Mammary epithelial cell (primary cell): ENCODE measurements at regions of chr3 and their contacts with region 1.

Region 1: DNA sequence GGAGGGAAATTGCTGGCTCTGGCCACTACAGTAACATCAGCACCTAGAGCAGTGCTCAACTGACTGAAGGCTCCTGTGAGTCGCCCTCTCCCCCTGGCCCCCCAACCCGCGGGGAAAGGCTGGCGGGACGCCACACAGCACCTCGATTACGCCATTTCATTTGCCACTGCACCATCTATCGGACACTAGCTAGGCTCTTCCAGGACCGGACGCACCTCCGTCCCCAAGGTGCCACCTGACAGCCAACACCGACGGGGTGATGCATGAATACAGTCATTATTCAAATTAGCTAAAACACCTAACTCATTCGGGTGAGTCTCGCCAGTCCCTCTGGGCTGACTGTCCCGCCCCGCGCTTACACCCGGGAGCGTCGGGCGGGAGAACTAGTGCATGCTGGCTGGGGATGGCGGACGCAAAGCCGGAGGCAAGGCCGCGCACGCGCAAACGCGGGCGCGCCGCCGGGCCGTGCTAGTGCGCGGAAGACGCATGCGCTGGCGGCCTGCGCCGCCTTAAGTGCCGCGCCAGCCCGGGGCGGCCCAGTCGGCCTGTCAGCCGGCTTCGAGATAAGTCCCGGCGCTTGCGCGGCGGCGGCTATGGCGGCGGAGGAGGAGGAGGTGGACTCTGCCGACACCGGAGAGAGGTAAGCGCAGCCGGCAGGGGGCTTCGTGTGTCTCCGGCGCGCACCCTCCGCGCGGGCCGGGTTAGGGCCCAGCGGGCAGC is at the start of gene ABHD5:
- DNase-seq: peak; percentile 95
- H3K4me3 ChIP-seq: peak within 1 kb of the TSS; percentile 74 to 87 (median 85)
- H3K27ac ChIP-seq: peak within 1 kb of the TSS; percentile 55
- H3K4me1 ChIP-seq: peaks cover 42% of the 10 kb centered on the region
- H3K27me3 ChIP-seq: no peaks in the 10 kb centered on the region
- CTCF ChIP-seq: peak in 1 of 2 donors; percentile 29
- total RNA-seq, gene ABHD5: 37.9 to 59.8 TPM

Region 2: DNA sequence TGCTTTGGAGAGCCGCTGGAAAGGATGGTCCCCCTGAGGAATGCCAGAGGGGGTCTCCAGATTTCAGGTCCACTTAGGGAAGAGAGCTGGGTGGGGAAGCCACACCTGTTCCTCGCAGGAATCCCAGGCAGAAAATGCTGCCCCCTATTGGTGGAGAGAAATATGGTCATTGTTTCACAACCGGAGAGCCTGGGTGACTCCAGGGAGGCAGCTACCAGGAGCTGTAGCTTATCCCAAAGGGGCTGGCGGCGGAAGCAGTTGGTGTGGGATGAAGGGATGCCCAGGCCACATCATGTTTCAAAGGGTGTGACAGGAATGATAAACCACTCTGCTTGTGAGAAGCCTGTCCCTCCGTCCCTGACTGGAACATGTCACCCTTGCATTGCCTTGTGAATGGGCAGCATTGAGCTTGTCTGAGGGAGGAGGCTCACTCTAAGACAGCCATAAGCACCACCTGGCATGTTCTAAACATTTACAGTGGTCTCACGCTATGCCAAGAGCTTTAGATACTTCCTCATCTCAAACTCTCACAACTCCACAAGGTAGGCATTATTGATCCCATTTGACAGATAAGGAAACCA is 619.2 kb before region 1 on chr3:
- CTCF ChIA-PET with region 1: no interaction called
- dilution Hi-C with region 1: no loop called
- in situ Hi-C with region 1: no loop called
- intact Hi-C with region 1: no loop called
- DNase-seq: no peak
- H3K4me3 ChIP-seq: no peak overlapping the region
- H3K27ac ChIP-seq: no peak overlapping the region
- H3K4me1 ChIP-seq: no peaks in the 10 kb centered on the region
- H3K27me3 ChIP-seq: no peaks in the 10 kb centered on the region
- CTCF ChIP-seq: peak; percentile 48 to 60

Region 3: GRCh38 chr3:43223670-43224364 is 466.7 kb before region 1 on chr3:
- CTCF ChIA-PET with region 1: no interaction called
- dilution Hi-C with region 1: no loop called
- in situ Hi-C with region 1: no loop called
- intact Hi-C with region 1: loop called (anchors 10 kb)
- DNase-seq: no peak
- H3K4me3 ChIP-seq: no peak overlapping the region
- H3K27ac ChIP-seq: no peak overlapping the region
- H3K4me1 ChIP-seq: no peaks in the 10 kb centered on the region
- H3K27me3 ChIP-seq: peaks cover 2% of the 10 kb centered on the region
- CTCF ChIP-seq: peak; percentile 30 to 52

Region 4: DNA sequence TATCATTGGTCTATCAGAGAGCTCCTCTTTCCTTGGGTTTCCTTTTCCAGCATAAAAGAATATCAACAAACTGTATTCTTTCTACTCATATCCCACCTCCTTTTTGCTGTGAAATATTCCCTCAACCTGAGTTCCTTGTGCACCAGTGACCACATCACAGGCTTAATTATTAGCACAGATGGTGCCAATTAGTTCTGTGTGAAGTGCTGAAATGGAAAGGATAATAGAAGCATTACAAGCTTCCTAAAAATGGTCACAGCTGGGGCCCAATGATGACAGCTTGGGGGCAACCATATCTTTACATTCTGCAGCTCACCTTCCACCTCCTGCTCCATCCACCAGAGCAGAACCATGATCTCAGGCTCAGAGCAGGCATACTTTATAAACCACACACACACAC is 153.3 kb before region 1 on chr3:
- CTCF ChIA-PET with region 1: no interaction called
- dilution Hi-C with region 1: no loop called
- in situ Hi-C with region 1: no loop called
- intact Hi-C with region 1: no loop called
- DNase-seq: no peak
- H3K4me3 ChIP-seq: no peak overlapping the region
- H3K27ac ChIP-seq: no peak overlapping the region
- H3K4me1 ChIP-seq: no peaks in the 10 kb centered on the region
- H3K27me3 ChIP-seq: no peaks in the 10 kb centered on the region
- CTCF ChIP-seq: no peak

Region 5: GRCh38 chr3:43606284-43606683 is 84.3 kb before region 1 on chr3:
- CTCF ChIA-PET with region 1: no interaction called
- dilution Hi-C with region 1: no loop called
- in situ Hi-C with region 1: no loop called
- intact Hi-C with region 1: no loop called
- DNase-seq: no peak
- H3K4me3 ChIP-seq: no peak overlapping the region
- H3K27ac ChIP-seq: no peak overlapping the region
- H3K4me1 ChIP-seq: no peaks in the 10 kb centered on the region
- H3K27me3 ChIP-seq: no peaks in the 10 kb centered on the region
- CTCF ChIP-seq: no peak

Region 6: DNA sequence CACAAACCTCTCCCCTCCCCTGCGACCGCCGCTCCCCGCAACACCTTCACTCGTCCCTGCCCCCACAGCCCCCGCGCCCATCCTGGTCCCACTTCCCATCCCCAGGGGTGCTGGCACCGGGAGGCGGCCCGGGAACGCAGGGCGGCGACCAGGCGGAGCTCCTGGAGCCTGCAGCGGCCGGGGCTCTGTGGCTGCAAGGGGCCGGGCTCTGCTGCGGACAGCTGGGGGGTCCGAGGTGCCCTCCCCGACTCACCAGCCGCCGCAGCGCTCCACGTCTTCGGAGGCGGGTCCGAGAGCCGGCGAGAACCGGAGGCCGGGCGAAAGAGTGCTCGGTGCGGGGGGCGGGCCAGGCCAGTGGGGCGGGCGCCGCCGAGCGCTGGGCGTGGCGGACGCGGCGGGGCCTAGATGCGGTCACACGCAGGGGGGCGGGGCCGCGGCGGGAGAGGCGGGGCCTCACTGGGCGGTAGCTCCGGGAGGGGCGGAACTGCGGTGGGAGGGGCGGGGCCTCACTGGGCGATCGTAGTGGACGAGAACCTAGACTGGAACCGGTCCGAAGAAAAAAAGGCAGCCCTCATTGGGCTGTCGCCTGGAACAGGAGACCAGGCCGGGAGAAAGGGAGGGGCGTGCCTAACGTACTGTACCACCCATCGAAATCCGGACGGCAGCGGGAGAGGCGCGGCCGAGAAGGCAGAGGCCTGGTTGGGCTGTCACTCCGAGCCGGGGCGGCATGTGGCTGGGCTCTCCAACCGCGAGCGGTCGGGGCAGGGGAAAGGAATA is 68.7 kb before region 1 on chr3 and contains the start of gene ANO10:
- CTCF ChIA-PET with region 1: no interaction called
- dilution Hi-C with region 1: no loop called
- in situ Hi-C with region 1: no loop called
- intact Hi-C with region 1: loop called (anchors 1 kb)
- DNase-seq: peak; percentile 99
- H3K4me3 ChIP-seq: peak within 1 kb of the TSS; percentile 92 to 95 (median 93)
- H3K27ac ChIP-seq: peak within 1 kb of the TSS; percentile 73
- H3K4me1 ChIP-seq: peaks cover 11% of the 10 kb centered on the region
- H3K27me3 ChIP-seq: no peaks in the 10 kb centered on the region
- CTCF ChIP-seq: no peak
- total RNA-seq, gene ANO10: 41.3 to 43.6 TPM

Region 7: GRCh38 chr3:43879166-43879565 is 188.6 kb after region 1 on chr3:
- CTCF ChIA-PET with region 1: no interaction called
- dilution Hi-C with region 1: no loop called
- in situ Hi-C with region 1: no loop called
- intact Hi-C with region 1: loop called (anchors 10 kb)
- DNase-seq: peak; percentile 25
- H3K4me3 ChIP-seq: no peak overlapping the region
- H3K27ac ChIP-seq: no peak overlapping the region
- H3K4me1 ChIP-seq: peaks cover 23% of the 10 kb centered on the region
- H3K27me3 ChIP-seq: no peaks in the 10 kb centered on the region
- CTCF ChIP-seq: peak; percentile 22 to 50

Region 8: GRCh38 chr3:44128057-44128775 is 437.7 kb after region 1 on chr3:
- CTCF ChIA-PET with region 1: no interaction called
- dilution Hi-C with region 1: no loop called
- in situ Hi-C with region 1: no loop called
- intact Hi-C with region 1: loop called (anchors 5 kb)
- DNase-seq: no peak
- H3K4me3 ChIP-seq: no peak overlapping the region
- H3K27ac ChIP-seq: no peak overlapping the region
- H3K4me1 ChIP-seq: peaks cover 22% of the 10 kb centered on the region
- H3K27me3 ChIP-seq: no peaks in the 10 kb centered on the region
- CTCF ChIP-seq: no peak